ENCODE measurements at regions of chr6 and their contacts with region 1.

Region 1: GRCh38 chr6:133916650-133917151 is 27.8 kb downstream of the TCF21 start:
- DNase-seq: peak; percentile 36
- H3K27ac ChIP-seq: no peak overlapping the region
- CTCF ChIP-seq: peak; percentile 90

Region 2: GRCh38 chr6:133568970-133569889 is 347.5 kb before region 1 on chr6:
- CTCF ChIA-PET with region 1: interaction called, 28 read pairs
- POLR2A ChIA-PET with region 1: no interaction called
- DNase-seq: peak; percentile 97
- H3K27ac ChIP-seq: peak overlapping the region; percentile 39; the same call in 1 of the 2 replicates
- CTCF ChIP-seq: peak; percentile 99

Region 3: DNA sequence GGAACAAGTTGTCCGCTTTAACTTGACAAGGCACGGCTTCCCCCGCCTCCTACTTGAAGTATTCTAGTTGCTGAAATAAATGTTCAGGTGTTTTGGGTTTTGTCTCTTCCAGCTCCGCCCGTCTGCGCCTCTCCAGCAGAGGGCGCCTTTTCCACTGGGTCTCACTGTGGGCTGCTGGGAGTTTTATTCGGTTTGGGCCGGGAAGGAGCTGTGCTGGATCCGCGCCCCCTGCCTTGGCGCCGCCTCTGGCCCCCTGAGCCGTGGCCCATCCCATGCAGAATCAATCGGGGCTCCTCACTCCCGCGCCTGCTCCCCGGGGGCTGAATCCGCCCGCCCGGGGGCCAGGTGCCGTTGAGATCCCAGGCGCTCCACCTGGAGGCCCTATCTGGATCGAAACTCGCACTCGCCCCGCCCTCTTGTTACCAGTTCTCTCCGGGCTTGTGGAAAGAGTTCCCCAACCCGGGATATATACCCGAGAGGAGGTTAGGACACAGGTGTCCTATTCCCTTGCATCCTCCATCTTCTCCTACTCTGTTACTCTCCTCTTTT is 78.8 kb before region 1 on chr6:
- CTCF ChIA-PET with region 1: interaction called, 31 read pairs
- POLR2A ChIA-PET with region 1: no interaction called
- DNase-seq: peak; percentile 63
- H3K27ac ChIP-seq: peak overlapping the region; percentile 33; the same call in 1 of the 2 replicates
- CTCF ChIP-seq: peak; percentile 80

Measured in RWPE1 (cell line).